Right ventricle myocardium inferior (tissue), 1 donor: ENCODE measurements at regions of chr5 and their contacts with region 1.

Region 1: GRCh38 chr5:45334939-45335338 is 361.2 kb downstream of the HCN1 start:
- DNase-seq: no peak
- ATAC-seq: peak; percentile 91

Region 2: GRCh38 chr5:45274241-45274640 is 60.7 kb before region 1 on chr5:
- intact Hi-C with region 1: loop called (anchors 5 kb)
- DNase-seq: no peak
- ATAC-seq: no peak